ENCODE measurements at regions of chr7 and their contacts with region 1.

Region 1: DNA sequence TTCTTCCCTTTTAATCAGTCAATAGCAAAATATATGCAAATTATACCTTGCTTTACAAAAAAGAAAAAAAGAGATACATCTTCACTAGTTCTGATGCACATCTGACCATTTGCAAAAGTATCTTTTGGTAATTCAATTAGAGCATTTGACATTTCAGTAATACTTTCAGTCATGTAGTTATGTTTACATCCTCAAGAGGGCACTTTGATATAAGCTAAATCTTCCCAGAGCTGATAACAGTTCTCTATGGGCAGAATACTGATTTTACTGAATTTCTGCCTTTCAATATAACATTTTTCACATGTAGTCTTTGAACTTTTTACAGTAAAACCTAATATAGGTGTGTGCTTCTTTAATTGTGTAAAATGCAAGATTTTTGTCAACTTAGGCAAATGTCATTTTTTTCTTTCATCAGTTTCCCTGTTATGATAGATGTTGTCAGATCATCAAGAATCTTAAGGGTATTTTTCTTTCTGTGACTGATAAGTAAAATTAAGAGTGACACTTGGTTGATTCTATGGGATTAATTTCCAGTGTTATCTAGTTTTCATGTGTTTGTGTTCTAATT is 703.5 kb upstream of the SEMA3D start:
- DNase-seq: no peak
- ATAC-seq: no peak
- H3K4me3 ChIP-seq: no peak overlapping the region
- H3K27ac ChIP-seq: no peak overlapping the region
- H3K4me1 ChIP-seq: no peaks in the 10 kb centered on the region
- H3K27me3 ChIP-seq: no peaks in the 10 kb centered on the region
- CTCF ChIP-seq: no peak
- POLR2A ChIP-seq: no peak

Region 2: DNA sequence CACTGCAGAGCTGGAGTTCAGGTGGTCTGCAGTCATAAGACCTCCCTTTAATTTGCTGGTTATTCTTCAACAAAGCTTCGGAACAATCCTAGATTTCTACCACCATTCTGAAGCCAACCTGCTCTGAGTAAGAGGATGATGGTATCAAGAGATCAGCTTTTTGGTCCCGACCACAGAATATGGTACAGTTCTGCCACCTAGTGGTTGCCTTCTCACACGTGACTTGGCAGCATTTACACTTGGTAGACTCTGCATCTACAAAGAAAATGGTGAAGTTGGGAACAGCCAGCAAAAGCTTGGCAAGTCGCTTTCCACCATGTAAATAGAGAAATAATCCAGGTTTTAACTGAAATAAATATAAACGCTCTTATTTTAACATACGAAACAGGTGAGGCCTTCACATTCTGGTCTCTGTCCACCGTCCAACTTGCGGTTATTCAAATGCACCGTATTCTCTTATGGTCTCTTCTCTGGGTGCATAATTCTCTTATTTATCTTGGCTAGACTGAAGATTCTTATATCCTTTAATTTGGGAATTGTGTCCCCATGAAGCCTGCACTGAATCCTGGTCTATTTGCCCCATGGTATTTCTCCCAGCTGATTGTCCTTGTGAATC is 579.5 kb after region 1 on chr7:
- in situ Hi-C with region 1: loop called in 1 of 4 experiments (anchors 25 kb)
- intact Hi-C with region 1: no loop called
- DNase-seq: peak in 1 of 2 donors; percentile 10
- ATAC-seq: no peak
- H3K4me3 ChIP-seq: no peak overlapping the region
- H3K27ac ChIP-seq: no peak overlapping the region
- H3K4me1 ChIP-seq: no peaks in the 10 kb centered on the region
- H3K27me3 ChIP-seq: no peaks in the 10 kb centered on the region
- CTCF ChIP-seq: peak in 3 of 5 experiments; percentile 31 to 49 (median 32)
- POLR2A ChIP-seq: no peak

Measured in gastrocnemius medialis (tissue), 4 donors.